OCI-LY7 (cell line): ENCODE measurements at regions of chr2 and their contacts with region 1.

Region 1: GRCh38 chr2:37324786-37325624 is at the start of gene PRKD3:
- DNase-seq: no peak
- H3K4me3 ChIP-seq: peak within 1 kb of the TSS; percentile 98
- H3K27ac ChIP-seq: peak within 1 kb of the TSS; percentile 81
- H3K4me1 ChIP-seq: peaks cover 40% of the 10 kb centered on the region
- CTCF ChIP-seq: no peak
- total RNA-seq, gene PRKD3: 63.2 and 74.3 TPM in 2 replicates

Region 2: DNA sequence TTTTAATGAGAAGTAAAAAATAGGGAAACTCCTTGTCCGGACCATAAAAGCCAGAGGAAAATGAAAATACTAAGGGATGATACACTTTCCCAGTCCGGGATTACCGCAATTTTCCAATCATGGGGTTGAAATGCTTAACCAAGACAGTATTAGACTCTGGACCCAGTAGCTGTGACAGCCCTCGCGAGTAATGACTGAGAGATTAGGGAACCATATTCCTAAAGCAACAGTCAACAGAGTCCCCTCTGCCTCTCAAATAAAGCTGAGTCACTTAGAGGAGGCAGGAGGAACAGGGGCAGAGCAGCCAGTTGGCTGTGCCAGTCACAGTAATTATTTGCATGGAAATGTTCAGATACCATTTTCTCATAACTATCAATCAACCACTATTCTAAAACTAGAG is 205.8 kb before region 1 on chr2:
- CTCF ChIA-PET with region 1: no interaction called
- POLR2A ChIA-PET with region 1: no interaction called
- intact Hi-C with region 1: no loop called
- DNase-seq: no peak
- H3K4me3 ChIP-seq: no peak overlapping the region
- H3K27ac ChIP-seq: no peak overlapping the region
- H3K4me1 ChIP-seq: no peaks in the 10 kb centered on the region
- CTCF ChIP-seq: no peak

Region 3: GRCh38 chr2:37196320-37197195 is 128.4 kb before region 1 on chr2 and contains the start of gene CEBPZOS:
- CTCF ChIA-PET with region 1: no interaction called
- POLR2A ChIA-PET with region 1: no interaction called
- intact Hi-C with region 1: loop called (anchors 5 kb)
- DNase-seq: peak; percentile 88
- H3K4me3 ChIP-seq: peak within 1 kb of the TSS; percentile 79
- H3K27ac ChIP-seq: peak within 1 kb of the TSS; percentile 56
- H3K4me1 ChIP-seq: peaks cover 23% of the 10 kb centered on the region
- CTCF ChIP-seq: peak; percentile 33; the same call in 1 of the 2 replicates
- total RNA-seq, gene CEBPZOS: 19.2 and 31.1 TPM in 2 replicates

Region 4: DNA sequence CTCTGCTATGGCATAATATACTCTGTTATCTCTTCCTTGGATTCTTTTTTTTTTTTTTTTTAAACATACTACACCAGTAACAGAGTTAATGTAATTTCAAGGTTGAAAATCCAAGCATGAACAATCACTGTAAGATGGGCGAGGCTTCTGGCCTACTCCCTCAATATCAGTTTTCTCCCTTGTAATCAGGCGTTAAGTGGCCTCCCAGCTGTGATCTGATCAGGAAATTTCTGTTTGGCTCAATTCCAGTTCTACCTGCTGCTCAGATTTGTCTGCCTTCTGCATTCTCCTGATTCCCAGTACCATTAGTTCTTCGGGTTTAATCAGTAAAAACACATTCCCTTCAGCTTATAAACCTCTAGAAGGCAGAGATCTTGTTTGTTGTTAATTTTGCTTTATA is 19.0 kb before region 1 on chr2:
- CTCF ChIA-PET with region 1: interaction called, 3 read pairs
- POLR2A ChIA-PET with region 1: interaction called, 30 read pairs
- intact Hi-C with region 1: no loop called
- DNase-seq: no peak
- H3K4me3 ChIP-seq: no peak overlapping the region
- H3K27ac ChIP-seq: peak overlapping the region; percentile 13
- H3K4me1 ChIP-seq: peaks cover 32% of the 10 kb centered on the region
- CTCF ChIP-seq: no peak

Region 5: GRCh38 chr2:37337642-37338310 is 12.8 kb after region 1 on chr2:
- CTCF ChIA-PET with region 1: interaction called, 4 read pairs
- POLR2A ChIA-PET with region 1: interaction called, 365 read pairs
- intact Hi-C with region 1: loop called (anchors 1 kb)
- DNase-seq: peak; percentile 35
- H3K4me3 ChIP-seq: peak overlapping the region; percentile 49
- H3K27ac ChIP-seq: peak overlapping the region; percentile 74
- H3K4me1 ChIP-seq: peaks cover 76% of the 10 kb centered on the region
- CTCF ChIP-seq: no peak

Region 6: DNA sequence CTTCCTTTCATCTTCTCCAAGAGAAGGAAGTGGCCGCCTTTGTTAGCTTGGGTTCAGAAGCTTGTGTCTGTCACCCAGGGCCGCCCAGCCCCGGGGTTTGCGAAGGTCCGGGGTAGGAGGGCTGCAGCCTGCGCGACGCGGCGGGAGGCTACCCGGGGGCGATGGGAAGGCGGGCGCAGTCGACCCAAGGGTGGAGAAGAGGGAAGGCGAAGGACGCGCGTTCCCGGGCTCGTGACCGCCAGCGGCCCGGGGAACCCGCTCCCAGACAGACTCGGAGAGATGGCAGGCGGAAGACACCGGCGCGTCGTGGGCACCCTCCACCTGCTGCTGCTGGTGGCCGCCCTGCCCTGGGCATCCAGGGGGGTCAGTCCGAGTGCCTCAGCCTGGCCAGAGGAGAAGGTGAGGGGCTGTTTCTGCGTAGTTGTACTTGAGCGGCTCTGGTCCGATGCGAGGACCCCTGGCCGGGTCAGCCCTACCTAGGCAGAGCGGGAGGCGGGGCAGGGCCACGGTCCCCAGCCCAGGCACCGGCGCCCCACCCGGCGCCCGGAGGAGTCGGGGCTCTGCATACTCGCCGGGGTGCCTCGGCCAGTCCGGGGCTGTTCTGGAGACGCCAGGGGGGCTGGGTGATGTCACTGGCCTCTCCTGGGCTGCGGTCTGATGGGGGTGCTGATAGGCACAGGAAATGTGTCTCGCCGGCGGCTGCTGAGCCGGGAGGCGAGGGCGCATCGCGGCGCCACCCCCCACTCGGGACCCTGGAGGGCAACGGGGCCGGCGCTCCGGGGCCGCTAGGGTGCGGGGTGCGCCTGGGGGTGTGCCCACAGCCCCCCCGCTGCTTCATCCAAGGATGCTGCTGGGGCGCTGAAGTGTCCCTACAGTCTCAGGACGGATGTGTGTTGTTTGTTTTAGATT is 19.7 kb after region 1 on chr2 and contains the start of gene QPCT:
- CTCF ChIA-PET with region 1: no interaction called
- POLR2A ChIA-PET with region 1: interaction called, 365 read pairs
- intact Hi-C with region 1: no loop called
- DNase-seq: peak; percentile 68
- H3K4me3 ChIP-seq: peak within 1 kb of the TSS; percentile 70
- H3K27ac ChIP-seq: peak within 1 kb of the TSS; percentile 41
- H3K4me1 ChIP-seq: peaks cover 79% of the 10 kb centered on the region
- CTCF ChIP-seq: peak; percentile 49
- total RNA-seq, gene QPCT: 3.5 and 8.2 TPM in 2 replicates

Region 7: GRCh38 chr2:37350034-37350433 is 25.0 kb after region 1 on chr2:
- CTCF ChIA-PET with region 1: no interaction called
- POLR2A ChIA-PET with region 1: interaction called, 156 read pairs
- intact Hi-C with region 1: no loop called
- DNase-seq: peak; percentile 63
- H3K4me3 ChIP-seq: no peak overlapping the region
- H3K27ac ChIP-seq: peak overlapping the region; percentile 43
- H3K4me1 ChIP-seq: peaks cover 71% of the 10 kb centered on the region
- CTCF ChIP-seq: no peak

Region 8: GRCh38 chr2:37357530-37357929 is 32.5 kb after region 1 on chr2:
- CTCF ChIA-PET with region 1: no interaction called
- POLR2A ChIA-PET with region 1: interaction called, 156 read pairs
- intact Hi-C with region 1: no loop called
- DNase-seq: no peak
- H3K4me3 ChIP-seq: no peak overlapping the region
- H3K27ac ChIP-seq: peak overlapping the region; percentile 54
- H3K4me1 ChIP-seq: peaks cover 75% of the 10 kb centered on the region
- CTCF ChIP-seq: no peak